ENCODE measurements at regions of chr3 and their contacts with region 1.

Region 1: GRCh38 chr3:64533617-64534317 is 154.0 kb downstream of the ADAMTS9 start:
- DNase-seq: peak; percentile 66
- H3K4me3 ChIP-seq: no peak overlapping the region
- H3K27ac ChIP-seq: no peak overlapping the region
- H3K4me1 ChIP-seq: no peaks in the 10 kb centered on the region
- H3K27me3 ChIP-seq: no peaks in the 10 kb centered on the region
- CTCF ChIP-seq: peak; percentile 80 to 96

Region 2: DNA sequence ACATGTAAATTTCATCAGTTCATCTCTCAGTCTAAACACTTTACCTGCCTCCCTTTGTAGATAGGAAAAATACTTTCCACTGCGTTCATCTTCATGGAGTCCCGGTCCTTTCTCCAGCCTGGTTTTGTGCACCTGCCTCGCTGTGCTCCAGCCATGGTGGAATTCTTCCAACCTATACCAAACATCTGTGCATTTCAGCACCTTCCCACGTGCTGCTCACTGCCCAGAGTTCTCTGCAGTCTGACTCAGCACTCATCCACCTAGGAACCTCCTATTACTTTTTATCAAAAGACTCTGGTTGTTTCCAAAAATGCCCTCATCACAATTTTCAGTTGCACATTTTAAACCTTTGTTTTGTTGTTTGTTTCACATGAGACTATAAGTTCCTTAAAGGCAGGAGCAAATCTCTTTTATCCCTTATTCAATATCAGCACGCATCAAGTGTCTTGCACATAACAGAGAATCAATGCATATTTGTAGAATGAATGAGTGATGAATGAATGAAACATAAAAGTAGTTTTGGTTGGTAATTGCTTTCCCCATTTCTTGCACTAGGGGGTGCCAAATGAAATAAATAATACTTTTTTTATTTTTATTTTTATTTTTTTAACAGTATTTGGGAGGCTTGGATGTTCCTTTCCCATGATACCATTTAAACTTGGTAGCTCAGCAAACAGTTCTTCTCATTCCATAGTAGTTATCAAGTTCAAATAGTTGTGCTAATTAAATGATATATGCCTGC is 184.3 kb after region 1 on chr3:
- CTCF ChIA-PET with region 1: interaction called, 4 read pairs
- dilution Hi-C with region 1: no loop called
- in situ Hi-C with region 1: no loop called
- intact Hi-C with region 1: loop called (anchors 10 kb)
- DNase-seq: no peak
- H3K4me3 ChIP-seq: no peak overlapping the region
- H3K27ac ChIP-seq: no peak overlapping the region
- H3K4me1 ChIP-seq: no peaks in the 10 kb centered on the region
- H3K27me3 ChIP-seq: no peaks in the 10 kb centered on the region
- CTCF ChIP-seq: peak; percentile 48 to 51

Region 3: DNA sequence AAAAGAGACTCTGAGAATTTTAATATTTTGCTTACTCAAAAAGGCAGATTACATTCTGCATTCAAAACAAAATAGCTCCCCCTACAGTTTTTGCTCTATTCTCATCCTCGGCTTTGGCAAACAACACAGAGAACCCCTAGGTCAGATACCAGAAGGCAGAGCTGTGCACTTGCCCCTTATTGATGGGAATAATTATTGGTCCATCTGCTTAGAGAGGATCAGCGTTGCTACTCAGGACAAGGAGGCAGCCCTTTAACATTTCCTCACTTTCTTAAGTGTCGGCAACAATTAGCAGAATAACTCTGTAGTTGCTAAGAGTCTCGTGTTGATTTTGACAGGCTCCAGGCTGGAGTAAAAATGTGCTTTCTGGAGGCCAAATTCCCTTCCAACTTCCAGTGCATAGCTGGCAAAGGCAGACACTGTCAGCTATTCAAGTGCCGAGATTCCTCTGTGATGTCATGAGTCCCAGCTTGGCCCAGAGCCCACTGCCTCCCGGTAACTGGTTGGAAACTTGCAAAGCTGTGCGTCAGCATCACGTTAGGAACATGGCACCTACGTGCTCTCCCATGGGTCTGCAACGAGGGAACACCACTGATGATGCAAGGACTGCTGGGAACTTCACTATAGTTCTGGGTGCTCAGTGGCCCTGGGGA is 636.7 kb after region 1 on chr3:
- CTCF ChIA-PET with region 1: no interaction called
- dilution Hi-C with region 1: no loop called
- in situ Hi-C with region 1: no loop called
- intact Hi-C with region 1: loop called (anchors 1 kb)
- DNase-seq: peak; percentile 82
- H3K4me3 ChIP-seq: no peak overlapping the region
- H3K27ac ChIP-seq: peak overlapping the region; percentile 39
- H3K4me1 ChIP-seq: peaks cover 5% of the 10 kb centered on the region
- H3K27me3 ChIP-seq: no peaks in the 10 kb centered on the region
- CTCF ChIP-seq: peak; percentile 24 to 58

Region 4: GRCh38 chr3:65342084-65342683 is 808.4 kb after region 1 on chr3:
- CTCF ChIA-PET with region 1: no interaction called
- dilution Hi-C with region 1: no loop called
- in situ Hi-C with region 1: no loop called
- intact Hi-C with region 1: loop called (anchors 10 kb)
- DNase-seq: peak; percentile 13
- H3K4me3 ChIP-seq: no peak overlapping the region
- H3K27ac ChIP-seq: no peak overlapping the region
- H3K4me1 ChIP-seq: no peaks in the 10 kb centered on the region
- H3K27me3 ChIP-seq: no peaks in the 10 kb centered on the region
- CTCF ChIP-seq: peak; percentile 76 to 81

Region 5: DNA sequence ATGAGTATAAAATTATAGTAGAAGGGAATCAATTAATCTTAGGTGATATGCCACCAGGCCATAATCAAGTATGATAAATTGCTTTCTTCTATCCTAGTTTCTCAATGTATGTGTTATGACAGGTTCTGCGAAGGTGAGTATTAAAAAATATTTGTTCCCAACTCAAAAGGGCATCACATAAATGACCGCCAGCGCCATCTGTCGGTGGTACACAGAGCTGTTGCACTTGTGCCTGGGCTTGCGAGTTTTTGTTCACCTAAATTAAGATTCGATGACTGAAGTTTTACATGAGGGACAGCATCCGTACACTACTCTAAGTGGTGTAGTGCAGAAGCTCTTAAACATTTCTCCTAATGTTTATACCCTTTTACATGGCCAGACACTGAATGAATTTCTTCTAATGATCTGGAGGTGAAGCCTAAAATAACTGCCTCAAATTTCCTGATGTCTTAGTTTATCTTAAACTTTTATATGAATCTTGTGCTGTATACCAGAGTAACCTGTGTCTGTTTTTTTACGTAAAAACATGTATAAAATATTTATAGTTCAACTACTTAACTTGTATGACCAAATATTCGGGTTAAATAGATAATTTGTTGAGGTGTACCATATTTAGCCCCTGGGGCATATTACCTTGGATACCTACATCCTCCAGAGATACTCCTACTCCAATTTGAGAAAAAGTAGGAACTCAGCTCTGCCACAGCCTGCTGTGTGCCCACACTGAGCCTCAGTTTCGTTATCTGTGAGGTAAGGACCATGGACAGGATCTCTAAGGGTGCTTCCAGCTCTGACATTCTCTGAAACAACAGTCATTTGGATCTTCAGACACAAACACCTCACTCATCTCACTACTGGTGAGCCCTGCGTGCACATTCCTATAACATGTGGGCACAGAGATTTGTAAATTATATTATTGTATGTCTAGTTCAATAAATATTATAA is 1139.4 kb after region 1 on chr3:
- CTCF ChIA-PET with region 1: interaction called, 10 read pairs
- dilution Hi-C with region 1: no loop called
- in situ Hi-C with region 1: no loop called
- intact Hi-C with region 1: loop called (anchors 1 kb)
- DNase-seq: peak; percentile 30
- H3K4me3 ChIP-seq: no peak overlapping the region
- H3K27ac ChIP-seq: no peak overlapping the region
- H3K4me1 ChIP-seq: peaks cover 6% of the 10 kb centered on the region
- H3K27me3 ChIP-seq: no peaks in the 10 kb centered on the region
- CTCF ChIP-seq: peak; percentile 83 to 84

Measured in mammary epithelial cell (primary cell).